WTC11 (cell line): ENCODE measurements at regions of chr11 and their contacts with region 1.

Region 1: GRCh38 chr11:32052218-32052617 is 38.7 kb upstream of the RCN1 start:
- DNase-seq: peak; percentile 56
- ATAC-seq: peak; percentile 44
- H3K4me3 Mint-ChIP-seq: no peak overlapping the region
- H3K27ac Mint-ChIP-seq: no peak overlapping the region
- H3K4me1 Mint-ChIP-seq: 0 out of 2 replicates have a peak, but pooled peaks cover 4% of the 10 kb centered on the region
- H3K27me3 Mint-ChIP-seq: peaks cover 5% of the 10 kb centered on the region
- CTCF ChIP-seq: peak; percentile 53

Region 2: DNA sequence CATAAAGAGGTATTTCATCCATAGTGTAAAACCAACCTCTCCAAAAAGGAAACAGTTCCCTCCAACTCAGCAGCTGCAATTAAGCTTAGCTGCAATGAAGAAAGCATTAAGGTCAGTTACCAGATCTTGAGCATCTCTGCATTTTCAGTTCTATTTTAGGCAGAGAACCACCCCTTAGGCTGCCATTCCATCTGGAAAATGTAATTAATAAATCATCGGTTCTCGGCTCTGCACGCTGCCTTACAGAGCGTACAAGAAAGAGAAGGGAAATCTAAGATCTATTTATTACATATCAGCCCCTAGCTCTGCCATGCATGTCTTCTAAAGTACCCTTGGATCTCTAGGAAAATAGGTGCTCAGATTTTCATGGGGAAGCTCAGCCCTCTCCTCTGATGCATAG is 110.1 kb after region 1 on chr11:
- CTCF ChIA-PET with region 1: interaction called, 16 read pairs
- POLR2A ChIA-PET with region 1: no interaction called
- DNase-seq: no peak
- ATAC-seq: no peak
- H3K4me3 Mint-ChIP-seq: no peak overlapping the region
- H3K27ac Mint-ChIP-seq: no peak overlapping the region
- H3K4me1 Mint-ChIP-seq: peaks cover 8% of the 10 kb centered on the region; the same call in 1 of the 2 replicates
- H3K27me3 Mint-ChIP-seq: no peaks in the 10 kb centered on the region; the same call in 1 of the 2 replicates
- CTCF ChIP-seq: no peak

Region 3: GRCh38 chr11:32176223-32176934 is 124.2 kb after region 1 on chr11:
- CTCF ChIA-PET with region 1: interaction called, 26 read pairs
- POLR2A ChIA-PET with region 1: no interaction called
- DNase-seq: peak; percentile 88
- ATAC-seq: peak; percentile 65
- H3K4me3 Mint-ChIP-seq: no peak overlapping the region
- H3K27ac Mint-ChIP-seq: no peak overlapping the region
- H3K4me1 Mint-ChIP-seq: peaks cover 15% of the 10 kb centered on the region
- H3K27me3 Mint-ChIP-seq: no peaks in the 10 kb centered on the region
- CTCF ChIP-seq: peak; percentile 84

Region 4: GRCh38 chr11:32374261-32374711 is 322.1 kb after region 1 on chr11:
- CTCF ChIA-PET with region 1: no interaction called
- POLR2A ChIA-PET with region 1: no interaction called
- DNase-seq: peak; percentile 86
- ATAC-seq: peak; percentile 98
- H3K4me3 Mint-ChIP-seq: no peak overlapping the region
- H3K27ac Mint-ChIP-seq: no peak overlapping the region
- H3K4me1 Mint-ChIP-seq: 0 out of 2 replicates have a peak, but pooled peaks cover 6% of the 10 kb centered on the region
- H3K27me3 Mint-ChIP-seq: peaks cover 10% of the 10 kb centered on the region
- CTCF ChIP-seq: peak; percentile 75